Activated CD8-positive, alpha-beta T cell treated with anti-CD3 and anti-CD28 coated beads, Interleukin-2, amount 10 ng/mL, durations not matched to agents 7 days and 5 days (primary cell): ENCODE measurements at regions of chr1 and their contacts with region 1.

Region 1: GRCh38 chr1:206635080-206635977 is at the start of gene DYRK3:
- DNase-seq: peak; percentile 95
- ATAC-seq: peak; percentile 95
- H3K4me3 Mint-ChIP-seq: peak within 1 kb of the TSS; percentile 80
- H3K27ac Mint-ChIP-seq: peak within 1 kb of the TSS; percentile 83
- H3K4me1 Mint-ChIP-seq: peaks cover 27% of the 10 kb centered on the region
- H3K27me3 Mint-ChIP-seq: peaks cover 17% of the 10 kb centered on the region
- total RNA-seq, gene DYRK3: 5.3 to 5.9 TPM

Region 2: GRCh38 chr1:206094024-206094423 is 541.3 kb before region 1 on chr1:
- CTCF ChIA-PET with region 1: no interaction called
- POLR2A ChIA-PET with region 1: no interaction called
- DNase-seq: no peak
- ATAC-seq: no peak
- H3K4me3 Mint-ChIP-seq: no peak overlapping the region
- H3K27ac Mint-ChIP-seq: no peak overlapping the region
- H3K4me1 Mint-ChIP-seq: no peaks in the 10 kb centered on the region
- H3K27me3 Mint-ChIP-seq: peaks cover 28% of the 10 kb centered on the region

Region 3: GRCh38 chr1:206651958-206652890 is 16.9 kb after region 1 on chr1:
- CTCF ChIA-PET with region 1: interaction called, 647 read pairs
- POLR2A ChIA-PET with region 1: interaction called, 5 read pairs
- DNase-seq: no peak
- ATAC-seq: no peak
- H3K4me3 Mint-ChIP-seq: no peak overlapping the region
- H3K27ac Mint-ChIP-seq: no peak overlapping the region
- H3K4me1 Mint-ChIP-seq: no peaks in the 10 kb centered on the region
- H3K27me3 Mint-ChIP-seq: peaks cover 6% of the 10 kb centered on the region